PC-9 (cell line): ENCODE measurements at regions of chr10 and their contacts with region 1.

Region 1: DNA sequence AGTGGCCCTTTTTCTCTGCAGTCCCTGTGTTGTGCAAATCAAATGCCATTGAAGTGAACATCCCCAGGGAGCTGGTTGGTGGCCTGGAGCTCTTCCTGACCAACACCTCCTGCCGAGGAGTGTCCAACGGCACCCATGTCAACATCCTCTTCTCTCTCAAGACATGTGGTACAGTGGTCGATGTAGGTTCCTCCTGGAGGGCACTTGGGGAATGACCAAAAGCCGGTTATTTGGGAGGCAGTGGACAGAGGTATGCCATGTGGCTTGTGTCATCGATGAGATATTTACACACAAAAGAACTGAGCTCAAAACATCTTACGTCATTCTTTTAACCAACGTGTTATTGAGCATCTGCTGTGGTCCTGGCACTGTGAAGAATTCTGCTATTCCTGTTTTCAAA is 19.7 kb downstream of the OIT3 start:
- DNase-seq: no peak
- H3K4me3 ChIP-seq: no peak overlapping the region
- H3K27ac ChIP-seq: no peak overlapping the region
- H3K4me1 ChIP-seq: no peaks in the 10 kb centered on the region
- H3K27me3 ChIP-seq: no peaks in the 10 kb centered on the region
- CTCF ChIP-seq: no peak

Region 2: DNA sequence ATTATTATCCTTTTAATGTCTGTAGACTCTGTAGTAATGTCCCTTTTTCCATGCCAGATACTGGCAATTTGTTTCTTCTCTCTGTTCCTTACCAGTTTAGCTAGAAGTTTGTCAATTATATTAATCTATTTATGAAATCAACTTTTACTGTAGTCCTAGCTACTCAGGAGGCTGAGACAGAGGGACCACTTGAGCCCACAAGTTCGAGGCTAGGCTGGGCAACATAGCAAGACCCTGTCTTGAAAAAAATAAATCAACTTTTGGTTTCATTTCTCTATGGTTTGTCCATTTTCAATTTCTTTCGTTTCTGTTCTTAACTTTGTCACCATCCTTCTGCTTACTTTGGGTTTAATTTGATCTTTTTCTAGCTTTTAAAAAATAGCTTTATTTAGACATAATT is 83.8 kb after region 1 on chr10:
- CTCF ChIA-PET with region 1: no interaction called
- POLR2A ChIA-PET with region 1: interaction called, 35 read pairs
- intact Hi-C with region 1: no loop called
- DNase-seq: no peak
- H3K4me3 ChIP-seq: no peak overlapping the region
- H3K27ac ChIP-seq: no peak overlapping the region
- H3K4me1 ChIP-seq: no peaks in the 10 kb centered on the region
- H3K27me3 ChIP-seq: no peaks in the 10 kb centered on the region
- CTCF ChIP-seq: no peak

Region 3: DNA sequence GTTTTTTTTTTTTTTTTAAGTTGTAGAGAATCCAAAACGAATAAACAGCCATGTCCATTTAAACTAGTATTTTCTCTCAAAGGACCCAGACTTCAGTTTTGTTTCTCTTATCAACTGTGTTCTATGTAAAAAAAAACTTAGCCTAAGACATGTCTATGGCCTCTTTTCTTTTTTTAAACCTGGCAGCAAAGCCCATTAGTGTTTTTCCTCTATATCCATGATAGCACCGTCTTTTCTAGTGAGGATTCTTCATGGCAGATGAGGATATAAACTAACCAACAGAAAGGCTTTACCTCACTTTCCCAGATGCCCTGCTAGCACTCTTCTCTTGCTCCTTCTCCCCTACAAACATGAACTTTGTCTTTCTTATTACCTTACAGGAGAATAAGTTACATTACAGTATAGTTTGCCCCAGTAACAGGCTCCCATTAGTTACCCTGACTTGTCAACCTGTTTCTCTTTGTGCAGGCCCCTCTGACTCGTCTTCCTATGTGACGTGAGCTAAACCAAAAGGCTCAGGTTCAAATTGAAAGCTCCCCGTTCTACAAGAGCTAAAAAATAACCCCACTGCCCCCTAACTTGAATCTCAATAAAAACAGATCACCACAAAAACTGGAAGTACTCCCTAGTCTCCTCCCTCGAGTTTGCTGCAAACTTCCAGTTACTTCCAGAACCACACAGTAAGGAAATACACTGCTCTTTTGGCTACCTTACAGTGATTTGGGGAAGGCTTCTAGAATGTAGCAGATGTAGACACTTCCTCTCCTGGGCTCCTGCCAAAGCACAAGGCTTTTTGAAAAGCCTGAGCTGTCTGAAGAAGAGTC is 163.3 kb after region 1 on chr10:
- CTCF ChIA-PET with region 1: no interaction called
- POLR2A ChIA-PET with region 1: no interaction called
- intact Hi-C with region 1: no loop called
- DNase-seq: no peak
- H3K4me3 ChIP-seq: no peak overlapping the region
- H3K27ac ChIP-seq: no peak overlapping the region
- H3K4me1 ChIP-seq: no peaks in the 10 kb centered on the region
- H3K27me3 ChIP-seq: no peaks in the 10 kb centered on the region
- CTCF ChIP-seq: no peak